WTC11 (cell line): ENCODE measurements at regions of chr12 and their contacts with region 1.

Region 1: DNA sequence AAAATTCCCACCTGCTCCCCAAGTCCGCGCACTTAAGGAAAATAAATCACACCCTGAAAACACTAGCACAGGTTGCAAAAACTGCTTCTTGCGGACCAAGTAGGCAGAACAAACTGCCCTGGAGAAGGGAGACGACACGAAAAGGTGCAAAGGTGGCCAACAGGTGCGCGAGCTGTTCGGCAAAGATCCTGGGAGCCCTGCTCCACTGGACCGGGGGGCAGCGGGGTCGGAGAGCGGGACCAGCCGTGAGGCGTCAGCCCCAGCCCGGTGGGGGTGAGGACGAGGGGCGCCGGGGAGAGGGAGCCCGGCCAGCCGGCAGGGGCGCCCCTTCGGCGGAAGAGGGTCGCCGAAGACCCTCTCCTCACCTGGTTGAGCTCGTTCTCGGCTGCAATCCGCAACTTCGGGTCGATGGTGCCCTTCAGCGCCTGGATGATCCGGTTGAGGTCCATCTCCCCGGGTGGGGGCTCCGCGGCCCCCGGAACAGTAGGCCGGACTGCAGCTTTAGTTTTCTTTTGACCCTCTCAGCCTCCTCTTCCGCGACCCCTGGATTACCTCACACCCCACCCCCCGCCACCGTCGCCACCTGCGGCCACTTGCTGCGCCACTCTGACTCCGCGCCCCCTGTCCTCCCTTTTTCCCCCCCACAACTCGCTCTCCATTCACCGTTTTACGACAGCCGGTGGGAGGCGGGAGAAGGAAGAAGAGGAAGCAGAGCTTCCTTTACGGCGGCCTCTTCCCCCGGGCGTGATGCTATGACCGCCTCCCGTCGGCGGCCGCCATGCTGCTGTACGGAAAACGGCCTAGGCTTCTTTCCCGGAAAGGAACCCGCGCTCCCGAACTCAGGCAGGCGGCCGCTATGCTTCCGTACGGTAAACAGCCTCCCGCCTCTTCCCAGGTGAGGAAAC is at the start of gene IPO8:
- DNase-seq: peak; percentile 94
- ATAC-seq: peak; percentile 86
- H3K4me3 Mint-ChIP-seq: peak within 1 kb of the TSS; percentile 93
- H3K27ac Mint-ChIP-seq: peak within 1 kb of the TSS; percentile 90
- H3K4me1 Mint-ChIP-seq: peaks cover 41% of the 10 kb centered on the region
- H3K27me3 Mint-ChIP-seq: no peaks in the 10 kb centered on the region
- CTCF ChIP-seq: no peak
- total RNA-seq, gene IPO8: 41.2 to 44.8 TPM (median 43.1 TPM) in 3 replicates

Region 2: DNA sequence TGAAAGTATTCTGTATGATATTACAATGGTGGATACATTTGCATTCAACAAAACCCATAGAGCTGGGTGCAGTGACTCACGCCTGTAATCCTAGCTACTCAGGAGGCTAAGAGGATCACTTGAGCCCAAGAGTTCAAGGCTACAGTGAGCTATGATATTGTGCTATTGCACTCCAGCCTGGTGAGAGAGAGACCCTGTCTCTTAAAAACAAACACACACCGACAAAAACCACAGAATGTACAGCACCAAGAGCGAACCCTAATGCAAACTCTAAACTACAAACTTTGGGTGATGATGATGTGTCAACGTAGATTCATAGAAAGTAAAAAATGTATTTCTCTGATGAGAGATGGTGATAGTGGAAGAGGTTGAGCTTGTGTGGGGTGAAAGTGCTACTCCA is 50.7 kb after region 1 on chr12:
- CTCF ChIA-PET with region 1: interaction called, 12 read pairs
- POLR2A ChIA-PET with region 1: no interaction called
- DNase-seq: no peak
- ATAC-seq: no peak
- H3K4me3 Mint-ChIP-seq: no peak overlapping the region
- H3K27ac Mint-ChIP-seq: peak overlapping the region; percentile 29; the same call in 1 of the 2 replicates
- H3K4me1 Mint-ChIP-seq: peaks cover 29% of the 10 kb centered on the region
- H3K27me3 Mint-ChIP-seq: no peaks in the 10 kb centered on the region
- CTCF ChIP-seq: no peak

Region 3: GRCh38 chr12:30795410-30796312 is 100.2 kb after region 1 on chr12:
- CTCF ChIA-PET with region 1: interaction called, 19 read pairs
- POLR2A ChIA-PET with region 1: interaction called, 6 read pairs
- DNase-seq: peak; percentile 81
- ATAC-seq: peak; percentile 61
- H3K4me3 Mint-ChIP-seq: peak overlapping the region; percentile 78
- H3K27ac Mint-ChIP-seq: peak overlapping the region; percentile 82
- H3K4me1 Mint-ChIP-seq: peaks cover 58% of the 10 kb centered on the region
- H3K27me3 Mint-ChIP-seq: peaks cover 19% of the 10 kb centered on the region
- CTCF ChIP-seq: no peak